H1 (cell line): ENCODE measurements at regions of chr9 and their contacts with region 1.

Region 1: GRCh38 chr9:20941174-20941690 is 90.2 kb downstream of the HACD4 start:
- DNase-seq: peak; percentile 29 to 57
- H3K4me3 ChIP-seq: no peak overlapping the region
- H3K27ac ChIP-seq: no peak overlapping the region
- H3K4me1 ChIP-seq: peaks cover 0 to 4% (median 2%) of the 10 kb centered on the region in 4 experiments; a peak in 3 of 7 replicates
- H3K27me3 ChIP-seq: no peaks in the 10 kb centered on the region
- CTCF ChIP-seq: peak; percentile 29 to 91 (median 81)
- EP300 ChIP-seq: no peak
- POLR2A ChIP-seq: no peak
- RAD21 ChIP-seq: peak; percentile 97 to 98

Region 2: DNA sequence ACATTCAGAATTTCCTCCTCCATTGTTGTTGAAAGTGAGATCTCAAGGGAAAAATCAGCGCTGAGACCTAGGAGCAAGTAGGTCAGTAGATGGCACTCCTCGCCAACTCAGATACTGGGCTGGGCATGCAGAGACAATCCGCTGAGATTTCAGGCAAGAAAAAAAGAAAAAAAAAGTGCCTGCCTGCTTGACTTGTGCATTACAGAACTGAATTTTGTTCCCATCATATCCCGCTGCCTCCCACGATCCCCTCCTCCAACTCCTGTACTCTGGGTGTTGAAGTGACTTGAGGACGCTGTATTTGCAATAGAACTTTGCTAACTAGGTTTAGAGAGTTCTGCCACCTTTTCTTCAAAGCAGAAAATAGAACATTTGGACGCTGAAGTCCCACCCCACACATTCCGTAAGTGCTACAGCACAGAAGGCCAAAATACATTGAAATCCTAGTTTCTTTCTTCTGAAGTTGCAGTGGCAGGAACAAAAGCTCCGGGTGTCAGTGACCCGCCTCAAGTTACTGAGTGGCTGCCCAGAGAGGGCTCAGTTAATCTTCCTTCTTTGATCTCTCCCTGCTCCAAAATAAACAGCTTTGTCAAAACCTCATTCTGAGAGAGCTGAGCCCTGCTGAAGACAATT is 584.7 kb before region 1 on chr9:
- CTCF ChIA-PET with region 1: interaction called, 14 read pairs
- POLR2A ChIA-PET with region 1: no interaction called
- DNase-seq: peak; percentile 36 to 61
- H3K4me3 ChIP-seq: peak overlapping the region in 2 of 4 experiments; percentile 7 to 27; a peak in 4 of 8 replicates
- H3K27ac ChIP-seq: no peak overlapping the region
- H3K4me1 ChIP-seq: peaks cover 0 to 11% (median 5%) of the 10 kb centered on the region in 4 experiments; a peak in 6 of 7 replicates
- H3K27me3 ChIP-seq: no peaks in the 10 kb centered on the region
- CTCF ChIP-seq: peak; percentile 65 to 92 (median 79)
- EP300 ChIP-seq: no peak
- POLR2A ChIP-seq: no peak
- RAD21 ChIP-seq: peak; percentile 94 to 96

Region 3: GRCh38 chr9:20624593-20625349 is 316.5 kb before region 1 on chr9:
- CTCF ChIA-PET with region 1: interaction called, 16 read pairs
- POLR2A ChIA-PET with region 1: no interaction called
- DNase-seq: no peak
- H3K4me3 ChIP-seq: peak overlapping the region; percentile 18 to 97 (median 25); a peak in 4 of 8 replicates
- H3K27ac ChIP-seq: no peak overlapping the region
- H3K4me1 ChIP-seq: peaks cover 0 to 17% (median 2%) of the 10 kb centered on the region in 4 experiments; a peak in 5 of 7 replicates
- H3K27me3 ChIP-seq: peaks cover 11 to 39% (median 36%) of the 10 kb centered on the region in 4 experiments
- CTCF ChIP-seq: peak; percentile 56 to 76 (median 70)
- EP300 ChIP-seq: no peak
- POLR2A ChIP-seq: no peak
- RAD21 ChIP-seq: peak; percentile 85 to 87

Region 4: GRCh38 chr9:20805766-20806165 is 135.5 kb before region 1 on chr9:
- CTCF ChIA-PET with region 1: no interaction called
- POLR2A ChIA-PET with region 1: no interaction called
- DNase-seq: no peak
- H3K4me3 ChIP-seq: no peak overlapping the region
- H3K27ac ChIP-seq: no peak overlapping the region
- H3K4me1 ChIP-seq: no peaks in the 10 kb centered on the region
- H3K27me3 ChIP-seq: no peaks in the 10 kb centered on the region
- CTCF ChIP-seq: no peak
- EP300 ChIP-seq: no peak
- POLR2A ChIP-seq: no peak
- RAD21 ChIP-seq: no peak

Region 5: DNA sequence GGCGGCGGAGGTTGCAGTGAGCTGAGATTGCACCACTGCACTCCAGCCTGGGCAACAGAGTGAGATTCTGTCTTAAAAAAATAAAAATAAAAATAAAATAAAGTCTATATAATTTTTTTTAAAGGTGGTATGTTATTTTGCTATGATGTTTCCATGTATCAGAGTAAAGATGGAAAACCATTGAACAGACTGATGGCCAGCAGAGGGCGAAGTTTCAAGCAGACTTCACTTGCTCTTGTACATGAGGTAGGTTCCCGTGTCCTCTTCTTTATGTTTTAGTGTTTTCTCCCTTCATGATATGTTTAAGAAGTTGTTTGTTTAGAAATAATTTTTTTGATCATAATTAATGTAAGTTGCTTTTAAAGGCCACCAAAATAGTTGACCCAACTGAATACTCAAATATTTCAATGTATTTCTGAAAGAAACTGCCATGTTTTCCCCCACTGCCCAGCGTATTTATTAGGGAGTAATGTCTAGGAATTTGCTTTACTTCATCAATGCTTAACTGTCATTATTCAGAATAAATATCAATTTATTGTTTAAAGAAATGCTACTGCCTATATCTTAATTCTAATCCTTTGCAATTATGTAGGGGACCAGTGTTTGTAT is 56.1 kb before region 1 on chr9:
- CTCF ChIA-PET with region 1: interaction called, 28 read pairs
- POLR2A ChIA-PET with region 1: no interaction called
- DNase-seq: peak; percentile 7 to 66
- H3K4me3 ChIP-seq: no peak overlapping the region
- H3K27ac ChIP-seq: no peak overlapping the region
- H3K4me1 ChIP-seq: no peaks in the 10 kb centered on the region
- H3K27me3 ChIP-seq: no peaks in the 10 kb centered on the region
- CTCF ChIP-seq: peak in 2 of 3 experiments; percentile 52 to 66; a peak in 3 of 4 replicates
- EP300 ChIP-seq: no peak
- POLR2A ChIP-seq: no peak
- RAD21 ChIP-seq: peak; percentile 45 to 53

Region 6: DNA sequence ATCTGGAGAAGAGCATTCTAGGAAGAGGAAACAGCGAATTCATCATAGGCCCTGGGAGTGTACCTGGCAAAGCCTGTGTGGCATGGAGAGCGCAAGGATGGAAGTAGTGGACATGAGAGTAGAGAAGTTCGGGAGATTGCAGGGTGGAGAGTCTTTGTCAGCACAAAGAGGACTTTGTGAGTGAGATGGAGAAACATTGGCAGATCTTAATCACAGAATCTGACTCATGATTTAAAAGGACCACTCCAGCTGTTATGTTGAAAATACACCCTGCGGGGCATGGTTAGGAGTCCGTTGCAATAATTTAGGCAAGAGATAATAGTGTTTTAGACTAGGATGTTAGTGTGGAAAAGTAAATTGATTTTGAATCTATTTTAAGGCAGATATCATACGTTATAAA is 26.7 kb before region 1 on chr9:
- CTCF ChIA-PET with region 1: no interaction called
- POLR2A ChIA-PET with region 1: no interaction called
- DNase-seq: no peak
- H3K4me3 ChIP-seq: no peak overlapping the region
- H3K27ac ChIP-seq: no peak overlapping the region
- H3K4me1 ChIP-seq: peaks cover 0 to 2% (median 0%) of the 10 kb centered on the region in 4 experiments; a peak in 1 of 7 replicates
- H3K27me3 ChIP-seq: no peaks in the 10 kb centered on the region
- CTCF ChIP-seq: no peak
- EP300 ChIP-seq: no peak
- POLR2A ChIP-seq: no peak
- RAD21 ChIP-seq: no peak

Region 7: GRCh38 chr9:20929276-20929675 is 12.0 kb before region 1 on chr9:
- CTCF ChIA-PET with region 1: interaction called, 11 read pairs
- POLR2A ChIA-PET with region 1: no interaction called
- DNase-seq: no peak
- H3K4me3 ChIP-seq: no peak overlapping the region
- H3K27ac ChIP-seq: no peak overlapping the region
- H3K4me1 ChIP-seq: peaks cover 0 to 3% (median 0%) of the 10 kb centered on the region in 4 experiments; a peak in 1 of 7 replicates
- H3K27me3 ChIP-seq: no peaks in the 10 kb centered on the region
- CTCF ChIP-seq: no peak
- EP300 ChIP-seq: no peak
- POLR2A ChIP-seq: no peak
- RAD21 ChIP-seq: no peak

Region 8: GRCh38 chr9:20962536-20963225 is 21.4 kb after region 1 on chr9:
- CTCF ChIA-PET with region 1: interaction called, 10 read pairs
- POLR2A ChIA-PET with region 1: no interaction called
- DNase-seq: no peak
- H3K4me3 ChIP-seq: no peak overlapping the region
- H3K27ac ChIP-seq: no peak overlapping the region
- H3K4me1 ChIP-seq: no peaks in the 10 kb centered on the region
- H3K27me3 ChIP-seq: no peaks in the 10 kb centered on the region
- CTCF ChIP-seq: no peak
- EP300 ChIP-seq: no peak
- POLR2A ChIP-seq: no peak
- RAD21 ChIP-seq: no peak

Region 9: DNA sequence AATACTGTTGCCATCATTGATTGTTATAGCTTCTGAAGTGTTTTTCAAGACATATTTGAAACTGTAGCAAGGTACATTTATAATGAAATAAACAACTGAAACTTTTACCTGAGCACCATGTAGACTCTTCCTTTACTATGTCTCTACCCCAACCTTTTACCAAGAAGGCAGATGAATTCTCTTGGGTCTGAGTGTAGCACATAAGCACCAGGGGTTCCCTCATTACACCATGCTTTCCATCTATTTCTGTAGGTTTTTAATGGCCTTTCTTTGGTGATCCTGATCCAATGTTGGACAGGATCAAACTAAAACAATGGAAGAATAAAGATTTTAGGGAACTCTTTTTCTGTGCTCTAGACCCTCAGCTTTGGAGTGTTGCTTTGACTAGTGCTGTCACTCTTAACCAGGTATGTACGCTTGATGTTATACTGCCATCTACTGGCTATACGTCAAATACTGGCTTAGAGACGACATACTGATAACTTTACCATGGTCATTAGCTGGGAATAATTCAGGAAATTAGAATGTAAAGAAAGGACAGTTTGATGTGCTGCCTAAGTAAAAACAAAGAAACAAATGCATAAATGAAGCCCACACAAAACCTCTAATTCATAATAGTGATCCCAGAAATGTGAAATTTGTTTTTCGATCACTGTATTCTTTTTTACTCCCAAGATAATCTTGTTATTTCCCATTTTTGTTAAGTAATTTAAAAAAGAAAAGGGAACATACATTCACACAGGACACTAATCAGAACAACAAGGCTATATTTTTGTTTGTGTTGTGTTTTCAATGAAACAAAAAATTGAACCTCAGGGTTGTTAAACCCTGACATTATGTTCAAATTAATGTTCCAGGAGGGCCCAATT is 169.7 kb after region 1 on chr9:
- CTCF ChIA-PET with region 1: interaction called, 12 read pairs
- POLR2A ChIA-PET with region 1: no interaction called
- DNase-seq: no peak
- H3K4me3 ChIP-seq: no peak overlapping the region
- H3K27ac ChIP-seq: no peak overlapping the region
- H3K4me1 ChIP-seq: no peaks in the 10 kb centered on the region
- H3K27me3 ChIP-seq: no peaks in the 10 kb centered on the region
- CTCF ChIP-seq: peak in 2 of 3 experiments; percentile 74 to 86; a peak in 3 of 4 replicates
- EP300 ChIP-seq: no peak
- POLR2A ChIP-seq: no peak
- RAD21 ChIP-seq: peak; percentile 97